ENCODE measurements at regions of chr13 and their contacts with region 1.

Region 1: DNA sequence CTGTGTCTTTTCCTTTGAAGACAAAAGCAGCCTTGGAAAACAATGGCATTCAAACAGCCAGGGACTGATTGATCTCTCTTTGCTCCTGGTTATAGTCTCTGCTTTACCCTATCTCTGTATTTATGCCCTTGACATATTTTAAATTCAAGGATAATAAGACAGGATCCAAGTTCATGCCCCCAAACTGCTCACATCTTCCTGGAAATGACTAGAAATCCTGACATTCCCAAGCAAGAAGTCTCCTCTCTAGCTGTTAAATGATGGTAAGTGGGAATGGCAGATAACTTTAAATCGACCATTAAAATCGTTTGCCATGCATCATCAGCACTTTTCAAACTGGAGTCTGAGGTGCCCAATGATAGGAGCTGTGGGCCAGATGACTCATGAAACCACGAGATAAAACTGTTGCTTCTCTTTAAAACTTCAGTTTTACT is 435.6 kb downstream of the FOXO1 start:
- DNase-seq: no peak
- H3K4me3 ChIP-seq: no peak overlapping the region
- H3K27ac ChIP-seq: peak overlapping the region in 1 of 2 donors; percentile 15
- H3K4me1 ChIP-seq: no peaks in the 10 kb centered on the region
- H3K27me3 ChIP-seq: no peaks in the 10 kb centered on the region
- CTCF ChIP-seq: no peak
- POLR2A ChIP-seq: no peak

Region 2: DNA sequence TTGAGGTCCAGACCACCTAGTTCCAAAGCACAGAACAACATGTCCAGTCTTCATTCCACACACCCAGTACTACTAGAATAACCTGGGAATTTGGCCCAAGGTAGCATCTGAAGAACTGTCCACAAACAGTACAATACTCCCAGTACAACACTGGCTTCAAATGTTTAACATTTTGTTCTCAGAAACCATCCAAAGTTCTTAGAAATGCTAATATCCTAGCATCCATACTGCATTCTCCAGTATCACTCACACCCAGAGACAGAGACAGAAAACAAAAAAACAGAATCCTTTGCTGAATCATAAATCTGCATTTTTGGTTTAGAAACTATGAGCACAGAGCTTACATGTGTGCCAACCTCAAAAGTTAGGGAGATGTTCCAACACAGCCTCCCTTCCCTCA is 55.2 kb before region 1 on chr13:
- intact Hi-C with region 1: loop called (anchors 2 kb)
- DNase-seq: no peak
- H3K4me3 ChIP-seq: no peak overlapping the region
- H3K27ac ChIP-seq: no peak overlapping the region
- H3K4me1 ChIP-seq: no peaks in the 10 kb centered on the region
- H3K27me3 ChIP-seq: no peaks in the 10 kb centered on the region
- CTCF ChIP-seq: no peak
- POLR2A ChIP-seq: no peak

Region 3: GRCh38 chr13:40477623-40478608 is 247.1 kb after region 1 on chr13:
- intact Hi-C with region 1: no loop called
- DNase-seq: no peak
- H3K4me3 ChIP-seq: no peak overlapping the region
- H3K27ac ChIP-seq: peak overlapping the region; percentile 11 to 42
- H3K4me1 ChIP-seq: peaks cover 7% of the 10 kb centered on the region
- H3K27me3 ChIP-seq: no peaks in the 10 kb centered on the region
- CTCF ChIP-seq: no peak
- POLR2A ChIP-seq: no peak

Measured in prostate gland (tissue), 2 donors.